Activated CD4-positive, alpha-beta memory T cell treated with anti-CD3 and anti-CD28 coated beads for 36 hours (primary cell): ENCODE measurements at regions of chr3 and their contacts with region 1.

Region 1: GRCh38 chr3:45210308-45211041 is 15.6 kb downstream of the TMEM158 start:
- DNase-seq: peak; percentile 86
- H3K4me3 Mint-ChIP-seq: no peak overlapping the region
- H3K27ac Mint-ChIP-seq: no peak overlapping the region
- H3K4me1 Mint-ChIP-seq: peaks cover 18% of the 10 kb centered on the region
- H3K27me3 Mint-ChIP-seq: peaks cover 11% of the 10 kb centered on the region

Region 2: GRCh38 chr3:45055411-45056143 is 154.9 kb before region 1 on chr3:
- CTCF ChIA-PET with region 1: interaction called, 530 read pairs
- POLR2A ChIA-PET with region 1: no interaction called
- intact Hi-C with region 1: no loop called
- DNase-seq: no peak
- H3K4me3 Mint-ChIP-seq: no peak overlapping the region
- H3K27ac Mint-ChIP-seq: no peak overlapping the region
- H3K4me1 Mint-ChIP-seq: peaks cover 18% of the 10 kb centered on the region
- H3K27me3 Mint-ChIP-seq: peaks cover 4% of the 10 kb centered on the region

Region 3: GRCh38 chr3:45105855-45106671 is 104.4 kb before region 1 on chr3:
- CTCF ChIA-PET with region 1: interaction called, 5 read pairs
- POLR2A ChIA-PET with region 1: no interaction called
- intact Hi-C with region 1: loop called (anchors 2 kb)
- DNase-seq: peak; percentile 85
- H3K4me3 Mint-ChIP-seq: no peak overlapping the region
- H3K27ac Mint-ChIP-seq: peak overlapping the region; percentile 54
- H3K4me1 Mint-ChIP-seq: peaks cover 64% of the 10 kb centered on the region
- H3K27me3 Mint-ChIP-seq: peaks cover 10% of the 10 kb centered on the region

Region 4: GRCh38 chr3:45167011-45167911 is 43.2 kb before region 1 on chr3:
- CTCF ChIA-PET with region 1: interaction called, 18 read pairs
- POLR2A ChIA-PET with region 1: no interaction called
- intact Hi-C with region 1: loop called (anchors 1 kb)
- DNase-seq: peak; percentile 95
- H3K4me3 Mint-ChIP-seq: peak overlapping the region; percentile 58
- H3K27ac Mint-ChIP-seq: peak overlapping the region; percentile 88
- H3K4me1 Mint-ChIP-seq: peaks cover 24% of the 10 kb centered on the region
- H3K27me3 Mint-ChIP-seq: no peaks in the 10 kb centered on the region

Region 5: GRCh38 chr3:45191924-45192417 is 18.5 kb before region 1 on chr3:
- CTCF ChIA-PET with region 1: interaction called, 11 read pairs
- POLR2A ChIA-PET with region 1: no interaction called
- intact Hi-C with region 1: no loop called
- DNase-seq: no peak
- H3K4me3 Mint-ChIP-seq: no peak overlapping the region
- H3K27ac Mint-ChIP-seq: no peak overlapping the region
- H3K4me1 Mint-ChIP-seq: peaks cover 3% of the 10 kb centered on the region
- H3K27me3 Mint-ChIP-seq: peaks cover 6% of the 10 kb centered on the region

Region 6: DNA sequence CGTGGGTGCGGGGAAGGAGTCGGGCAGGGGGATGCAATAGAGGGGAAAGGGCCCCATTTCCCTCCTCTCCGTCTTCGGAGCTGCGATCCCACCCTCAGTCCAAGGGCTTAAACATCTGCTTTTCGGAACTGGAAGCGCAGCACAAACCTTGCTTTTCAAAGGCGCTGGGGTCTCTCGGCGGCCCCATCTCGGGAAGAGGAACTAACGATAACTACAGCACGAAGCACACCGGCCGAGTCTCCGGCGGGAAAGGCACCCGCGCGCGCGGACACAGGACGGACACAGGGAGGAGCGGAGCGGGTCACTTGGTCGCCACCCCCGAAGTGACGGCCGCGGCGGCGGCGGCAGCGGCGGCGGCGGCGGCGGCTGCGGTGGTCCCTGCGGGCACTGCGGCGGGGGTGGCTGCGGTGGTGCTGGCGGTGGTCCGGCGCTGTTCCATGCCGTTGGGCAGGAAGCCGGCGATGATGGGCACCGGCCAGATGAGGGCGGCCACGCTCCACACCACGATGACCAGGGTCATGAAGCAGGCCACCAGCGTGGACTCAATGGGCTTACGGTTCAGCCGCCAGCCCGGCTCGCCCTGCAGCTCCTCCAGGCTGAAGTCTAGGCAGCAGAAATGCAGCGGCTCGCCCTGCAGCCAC is 14.5 kb after region 1 on chr3:
- CTCF ChIA-PET with region 1: interaction called, 50 read pairs
- POLR2A ChIA-PET with region 1: no interaction called
- intact Hi-C with region 1: no loop called
- DNase-seq: peak; percentile 61
- H3K4me3 Mint-ChIP-seq: peak overlapping the region; percentile 65
- H3K27ac Mint-ChIP-seq: no peak overlapping the region
- H3K4me1 Mint-ChIP-seq: peaks cover 14% of the 10 kb centered on the region
- H3K27me3 Mint-ChIP-seq: peaks cover 68% of the 10 kb centered on the region

Region 7: DNA sequence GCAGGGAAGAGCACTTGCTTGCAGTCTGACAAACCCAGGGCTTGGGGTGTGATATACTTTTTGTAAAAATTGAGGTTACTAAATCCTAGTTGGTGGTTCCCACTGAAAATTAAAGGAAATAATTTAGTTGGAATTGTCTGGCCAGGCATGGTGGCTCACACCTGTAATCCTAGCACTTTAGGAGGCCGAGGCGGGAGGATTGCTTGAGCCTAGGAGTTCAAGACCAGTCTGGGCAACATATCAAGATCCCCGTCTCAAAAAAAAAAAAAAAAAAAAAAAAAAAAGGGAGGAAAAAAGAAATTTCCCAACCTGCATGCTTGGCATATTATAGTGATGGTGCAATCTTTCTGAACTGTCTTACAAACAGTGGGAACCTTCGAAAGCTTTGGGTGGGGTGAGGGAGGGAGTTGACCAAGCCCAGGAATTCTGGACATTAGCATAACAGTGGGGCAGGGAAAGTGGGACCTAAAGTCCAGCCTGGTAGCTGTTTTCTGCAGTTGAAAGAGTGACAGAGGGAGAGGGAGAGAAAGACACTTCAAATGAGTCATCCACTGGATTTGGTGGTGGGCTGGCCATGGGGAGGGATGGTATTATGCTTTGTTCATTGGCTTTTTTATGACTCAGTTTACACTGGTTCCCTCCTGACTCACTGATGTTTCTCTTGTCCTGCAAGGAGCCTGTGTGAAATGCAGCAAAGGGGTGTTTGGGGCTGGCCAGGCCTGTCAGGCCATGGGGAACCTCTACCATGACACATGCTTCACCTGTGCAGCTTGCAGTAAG is 425.2 kb after region 1 on chr3:
- CTCF ChIA-PET with region 1: no interaction called
- POLR2A ChIA-PET with region 1: no interaction called
- intact Hi-C with region 1: no loop called
- DNase-seq: no peak
- H3K4me3 Mint-ChIP-seq: no peak overlapping the region
- H3K27ac Mint-ChIP-seq: no peak overlapping the region
- H3K4me1 Mint-ChIP-seq: peaks cover 9% of the 10 kb centered on the region
- H3K27me3 Mint-ChIP-seq: no peaks in the 10 kb centered on the region